Left ventricle myocardium inferior (tissue), 1 donor: ENCODE measurements at regions of chr4 and their contacts with region 1.

Region 1: DNA sequence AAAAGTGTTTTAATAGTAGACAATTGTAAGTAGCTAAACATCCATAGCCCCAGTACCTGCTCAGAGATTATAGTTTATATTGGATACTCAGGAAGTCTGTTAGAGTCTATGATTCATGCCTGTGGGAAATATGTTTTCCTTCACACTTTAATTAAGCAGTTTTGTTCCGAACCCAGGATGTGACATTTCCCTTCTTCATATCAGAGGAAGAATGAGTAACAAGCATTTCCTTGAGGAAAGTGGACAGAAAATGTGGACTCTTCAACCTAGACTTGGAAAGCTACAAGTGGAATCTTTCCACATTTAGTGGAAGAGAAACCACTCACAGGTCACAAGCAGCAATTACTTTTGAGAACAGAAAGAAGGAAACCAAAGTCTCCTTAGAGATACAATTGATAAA is 419.4 kb downstream of the C4orf33 start:
- DNase-seq: no peak
- H3K4me3 ChIP-seq: no peak overlapping the region
- H3K27ac ChIP-seq: no peak overlapping the region
- H3K4me1 ChIP-seq: no peaks in the 10 kb centered on the region
- H3K27me3 ChIP-seq: no peaks in the 10 kb centered on the region
- CTCF ChIP-seq: no peak

Region 2: DNA sequence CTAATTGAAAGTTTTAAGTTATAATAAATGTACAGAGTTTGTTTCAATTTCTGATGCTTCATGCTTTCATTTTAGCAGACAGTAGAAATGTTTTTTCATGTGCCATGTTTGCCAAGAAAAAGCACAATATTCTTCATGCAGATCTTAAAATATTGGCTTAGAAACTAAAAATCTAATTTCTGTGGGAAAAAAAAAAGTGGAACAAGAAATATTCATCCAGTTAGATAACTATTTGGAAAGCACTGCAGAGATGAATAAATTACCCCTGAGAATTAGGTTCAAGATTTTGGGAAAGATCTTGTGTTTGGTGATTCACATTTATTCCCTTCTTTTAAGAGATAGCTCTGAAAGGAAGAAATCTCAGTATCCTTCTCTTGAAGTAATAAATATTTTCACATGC is 493.1 kb after region 1 on chr4:
- intact Hi-C with region 1: loop called (anchors 10 kb)
- DNase-seq: no peak
- H3K4me3 ChIP-seq: no peak overlapping the region
- H3K27ac ChIP-seq: no peak overlapping the region
- H3K4me1 ChIP-seq: no peaks in the 10 kb centered on the region
- H3K27me3 ChIP-seq: no peaks in the 10 kb centered on the region
- CTCF ChIP-seq: no peak